ENCODE measurements at regions of chr5 and their contacts with region 1.

Region 1: GRCh38 chr5:40672425-40672824 is 7.3 kb upstream of the PTGER4 start:
- H3K4me3 Mint-ChIP-seq: peak overlapping the region; percentile 44
- H3K27ac Mint-ChIP-seq: peak overlapping the region; percentile 70
- H3K4me1 Mint-ChIP-seq: peaks cover 59% of the 10 kb centered on the region
- H3K27me3 Mint-ChIP-seq: no peaks in the 10 kb centered on the region

Region 2: GRCh38 chr5:40603378-40603777 is 69.0 kb before region 1 on chr5:
- intact Hi-C with region 1: loop called (anchors 5 kb)
- H3K4me3 Mint-ChIP-seq: no peak overlapping the region
- H3K27ac Mint-ChIP-seq: no peak overlapping the region
- H3K4me1 Mint-ChIP-seq: peaks cover 61% of the 10 kb centered on the region
- H3K27me3 Mint-ChIP-seq: peaks cover 2% of the 10 kb centered on the region

Measured in dendritic cell treated with granulocyte-macrophage colony-stimulating factor and Interleukin-4, amounts not matched to agents 40 ng/mL and 50 ng/mL, for 4 days (primary cell).